CD4-positive, alpha-beta memory T cell (primary cell): ENCODE measurements at regions of chr6 and their contacts with region 1.

Region 1: DNA sequence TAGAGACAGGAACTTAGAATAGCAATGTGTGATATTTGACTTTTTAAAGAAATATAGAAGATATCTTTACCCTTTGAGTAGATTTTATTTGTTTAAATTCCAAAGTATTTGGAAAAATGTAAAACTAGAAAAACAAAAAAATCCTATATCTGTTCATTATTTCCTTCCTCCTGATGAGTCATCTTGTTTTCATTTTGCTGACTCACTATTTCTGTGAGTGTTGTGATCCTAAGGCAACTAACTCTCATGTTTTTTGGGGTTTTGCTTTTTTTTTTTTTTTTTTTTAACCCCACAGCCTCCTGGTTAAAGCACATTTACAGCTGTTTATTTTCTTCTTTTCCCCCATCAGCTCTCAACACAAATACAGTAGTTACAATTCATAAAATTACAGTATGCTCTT is 37.8 kb upstream of the THEMIS start:
- DNase-seq: peak in 3 of 5 donors; percentile 22 to 31 (median 30)
- H3K4me3 ChIP-seq: no peak overlapping the region
- H3K4me3 Mint-ChIP-seq: peak overlapping the region in 1 of 8 donors; percentile 64
- H3K27ac ChIP-seq: no peak overlapping the region
- H3K27ac Mint-ChIP-seq: peak overlapping the region in 6 of 7 donors; percentile 18 to 85 (median 72)
- H3K4me1 ChIP-seq: peaks cover 41% of the 10 kb centered on the region
- H3K4me1 Mint-ChIP-seq: peaks cover 30 to 55% (median 39%) of the 10 kb centered on the region in 4 donors
- H3K27me3 ChIP-seq: no peaks in the 10 kb centered on the region
- H3K27me3 Mint-ChIP-seq: no peaks in the 10 kb centered on the region

Region 2: GRCh38 chr6:127748290-127748689 is 190.4 kb before region 1 on chr6:
- CTCF ChIA-PET with region 1: no interaction called
- POLR2A ChIA-PET with region 1: no interaction called
- intact Hi-C with region 1: no loop called
- DNase-seq: no peak
- H3K4me3 ChIP-seq: no peak overlapping the region
- H3K4me3 Mint-ChIP-seq: peak overlapping the region in 5 of 8 donors; percentile 13 to 38 (median 21)
- H3K27ac ChIP-seq: no peak overlapping the region
- H3K27ac Mint-ChIP-seq: peak overlapping the region; percentile 36 to 85 (median 71)
- H3K4me1 ChIP-seq: peaks cover 55% of the 10 kb centered on the region
- H3K4me1 Mint-ChIP-seq: peaks cover 54 to 73% (median 62%) of the 10 kb centered on the region in 4 donors
- H3K27me3 ChIP-seq: no peaks in the 10 kb centered on the region
- H3K27me3 Mint-ChIP-seq: no peaks in the 10 kb centered on the region

Region 3: GRCh38 chr6:127900935-127901334 is 37.8 kb before region 1 on chr6 and contains the start of gene THEMIS:
- CTCF ChIA-PET with region 1: interaction called, 4 read pairs
- POLR2A ChIA-PET with region 1: interaction called, 72 read pairs
- intact Hi-C with region 1: loop called (anchors 1 kb)
- DNase-seq: peak; percentile 66 to 73 (median 69)
- H3K4me3 ChIP-seq: peak within 1 kb of the TSS; percentile 66 to 72
- H3K4me3 Mint-ChIP-seq: peak within 1 kb of the TSS; percentile 98 to 100 (median 99)
- H3K27ac ChIP-seq: peak within 1 kb of the TSS; percentile 73
- H3K27ac Mint-ChIP-seq: peak within 1 kb of the TSS; percentile 90 to 98 (median 96)
- H3K4me1 ChIP-seq: peaks cover 68% of the 10 kb centered on the region
- H3K4me1 Mint-ChIP-seq: peaks cover 41 to 70% (median 56%) of the 10 kb centered on the region in 4 donors
- H3K27me3 ChIP-seq: no peaks in the 10 kb centered on the region
- H3K27me3 Mint-ChIP-seq: no peaks in the 10 kb centered on the region
- total RNA-seq, gene THEMIS: 58.1 to 58.7 TPM

Region 4: DNA sequence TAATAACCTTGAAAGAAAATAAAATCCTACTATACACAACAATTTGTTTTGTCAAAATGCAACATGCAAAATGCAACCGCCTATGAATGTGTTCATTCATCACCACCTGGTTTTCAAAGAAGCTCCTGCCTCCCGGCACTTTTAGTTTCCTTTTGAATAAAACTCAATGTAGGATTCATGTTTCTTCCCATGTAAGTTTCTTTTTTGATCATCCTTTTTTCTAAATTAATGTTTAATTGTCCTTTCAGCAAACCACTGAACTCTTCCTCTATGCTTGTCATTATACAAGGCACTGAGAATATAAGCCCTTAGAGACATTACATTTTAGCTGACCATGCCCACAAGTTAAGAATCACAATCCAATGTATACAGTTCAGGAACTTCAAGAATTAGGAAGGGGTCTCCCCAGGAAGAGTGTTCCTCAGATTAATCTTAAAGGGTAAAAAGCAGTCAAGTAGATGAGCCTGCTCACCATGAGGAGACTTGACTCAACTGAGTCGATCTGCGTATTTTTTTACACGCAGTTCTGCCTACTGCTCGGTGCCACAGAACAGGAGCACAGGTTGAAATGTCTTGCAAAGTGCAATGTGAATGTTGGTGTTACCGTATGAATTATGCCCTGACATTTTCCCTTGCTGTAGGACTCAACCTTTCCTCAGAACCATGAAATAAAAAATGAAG is 30.6 kb before region 1 on chr6:
- CTCF ChIA-PET with region 1: interaction called, 4 read pairs
- POLR2A ChIA-PET with region 1: interaction called, 72 read pairs
- intact Hi-C with region 1: no loop called
- DNase-seq: peak in 4 of 5 donors; percentile 36 to 43 (median 39)
- H3K4me3 ChIP-seq: peak overlapping the region; percentile 44 to 72
- H3K4me3 Mint-ChIP-seq: peak overlapping the region; percentile 82 to 98 (median 90)
- H3K27ac ChIP-seq: peak overlapping the region; percentile 77
- H3K27ac Mint-ChIP-seq: peak overlapping the region; percentile 87 to 98 (median 95)
- H3K4me1 ChIP-seq: peaks cover 56% of the 10 kb centered on the region
- H3K4me1 Mint-ChIP-seq: peaks cover 48 to 76% (median 60%) of the 10 kb centered on the region in 4 donors
- H3K27me3 ChIP-seq: no peaks in the 10 kb centered on the region
- H3K27me3 Mint-ChIP-seq: no peaks in the 10 kb centered on the region

Region 5: GRCh38 chr6:127924440-127924839 is 14.3 kb before region 1 on chr6:
- CTCF ChIA-PET with region 1: interaction called, 11 read pairs
- POLR2A ChIA-PET with region 1: interaction called, 77 read pairs
- intact Hi-C with region 1: loop called (anchors 1 kb)
- DNase-seq: no peak
- H3K4me3 ChIP-seq: no peak overlapping the region
- H3K4me3 Mint-ChIP-seq: peak overlapping the region in 3 of 8 donors; percentile 9 to 26 (median 14)
- H3K27ac ChIP-seq: no peak overlapping the region
- H3K27ac Mint-ChIP-seq: peak overlapping the region in 3 of 7 donors; percentile 0 to 64 (median 3)
- H3K4me1 ChIP-seq: peaks cover 59% of the 10 kb centered on the region
- H3K4me1 Mint-ChIP-seq: peaks cover 47 to 67% (median 59%) of the 10 kb centered on the region in 4 donors
- H3K27me3 ChIP-seq: no peaks in the 10 kb centered on the region
- H3K27me3 Mint-ChIP-seq: no peaks in the 10 kb centered on the region

Region 6: DNA sequence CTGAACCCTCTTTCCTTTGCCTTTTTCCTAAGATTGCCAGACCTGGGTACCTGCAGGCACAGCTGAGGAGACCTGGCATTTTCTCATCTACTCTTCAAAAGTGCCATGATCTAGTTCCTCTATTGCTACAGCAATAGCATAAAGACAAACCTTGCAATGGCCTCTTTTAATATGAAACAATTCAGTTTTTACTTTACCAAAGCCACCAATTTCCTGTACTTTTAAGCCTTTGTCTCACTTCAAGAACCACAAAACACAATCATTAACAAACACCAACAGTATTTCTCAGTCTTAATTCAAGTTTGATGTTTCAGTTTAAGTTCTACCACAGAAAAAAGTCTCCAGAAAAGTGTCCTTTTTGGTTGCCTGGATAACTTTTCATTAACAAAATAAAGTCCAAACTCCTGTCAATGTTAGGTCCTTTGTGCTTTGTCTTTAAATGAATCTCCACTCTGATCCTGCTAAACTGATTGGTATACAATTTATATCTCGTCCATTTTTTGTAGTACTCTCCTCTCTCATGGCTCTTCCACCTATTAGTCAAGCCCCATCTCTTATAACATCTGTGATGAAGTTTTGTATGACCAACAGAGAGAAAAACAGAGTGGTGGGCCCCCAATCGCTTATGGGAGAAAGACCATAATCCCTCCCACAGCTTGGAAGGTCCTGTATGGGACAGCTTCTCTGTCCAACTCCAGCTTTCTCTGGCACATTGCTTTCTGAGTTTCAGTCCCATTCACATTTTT is 12.6 kb after region 1 on chr6:
- CTCF ChIA-PET with region 1: interaction called, 7 read pairs
- POLR2A ChIA-PET with region 1: interaction called, 27 read pairs
- intact Hi-C with region 1: loop called (anchors 2 kb)
- DNase-seq: peak in 4 of 5 donors; percentile 61 to 73 (median 66)
- H3K4me3 ChIP-seq: peak overlapping the region; percentile 4 to 12
- H3K4me3 Mint-ChIP-seq: peak overlapping the region; percentile 69 to 88 (median 81)
- H3K27ac ChIP-seq: peak overlapping the region; percentile 14
- H3K27ac Mint-ChIP-seq: peak overlapping the region; percentile 83 to 91 (median 88)
- H3K4me1 ChIP-seq: peaks cover 66% of the 10 kb centered on the region
- H3K4me1 Mint-ChIP-seq: peaks cover 38 to 69% (median 55%) of the 10 kb centered on the region in 4 donors
- H3K27me3 ChIP-seq: no peaks in the 10 kb centered on the region
- H3K27me3 Mint-ChIP-seq: no peaks in the 10 kb centered on the region

Region 7: GRCh38 chr6:127971945-127972391 is 33.3 kb after region 1 on chr6:
- CTCF ChIA-PET with region 1: interaction called, 5 read pairs
- POLR2A ChIA-PET with region 1: interaction called, 18 read pairs
- intact Hi-C with region 1: loop called (anchors 1 kb)
- DNase-seq: peak; percentile 81 to 89 (median 83)
- H3K4me3 ChIP-seq: peak overlapping the region in 1 of 2 donors; percentile 36
- H3K4me3 Mint-ChIP-seq: peak overlapping the region; percentile 87 to 95 (median 90)
- H3K27ac ChIP-seq: peak overlapping the region; percentile 71
- H3K27ac Mint-ChIP-seq: peak overlapping the region; percentile 92 to 98 (median 98)
- H3K4me1 ChIP-seq: peaks cover 64% of the 10 kb centered on the region
- H3K4me1 Mint-ChIP-seq: peaks cover 41 to 56% (median 46%) of the 10 kb centered on the region in 4 donors
- H3K27me3 ChIP-seq: no peaks in the 10 kb centered on the region
- H3K27me3 Mint-ChIP-seq: no peaks in the 10 kb centered on the region